H1 (cell line): ENCODE measurements at regions of chr1 and their contacts with region 1.

Region 1: DNA sequence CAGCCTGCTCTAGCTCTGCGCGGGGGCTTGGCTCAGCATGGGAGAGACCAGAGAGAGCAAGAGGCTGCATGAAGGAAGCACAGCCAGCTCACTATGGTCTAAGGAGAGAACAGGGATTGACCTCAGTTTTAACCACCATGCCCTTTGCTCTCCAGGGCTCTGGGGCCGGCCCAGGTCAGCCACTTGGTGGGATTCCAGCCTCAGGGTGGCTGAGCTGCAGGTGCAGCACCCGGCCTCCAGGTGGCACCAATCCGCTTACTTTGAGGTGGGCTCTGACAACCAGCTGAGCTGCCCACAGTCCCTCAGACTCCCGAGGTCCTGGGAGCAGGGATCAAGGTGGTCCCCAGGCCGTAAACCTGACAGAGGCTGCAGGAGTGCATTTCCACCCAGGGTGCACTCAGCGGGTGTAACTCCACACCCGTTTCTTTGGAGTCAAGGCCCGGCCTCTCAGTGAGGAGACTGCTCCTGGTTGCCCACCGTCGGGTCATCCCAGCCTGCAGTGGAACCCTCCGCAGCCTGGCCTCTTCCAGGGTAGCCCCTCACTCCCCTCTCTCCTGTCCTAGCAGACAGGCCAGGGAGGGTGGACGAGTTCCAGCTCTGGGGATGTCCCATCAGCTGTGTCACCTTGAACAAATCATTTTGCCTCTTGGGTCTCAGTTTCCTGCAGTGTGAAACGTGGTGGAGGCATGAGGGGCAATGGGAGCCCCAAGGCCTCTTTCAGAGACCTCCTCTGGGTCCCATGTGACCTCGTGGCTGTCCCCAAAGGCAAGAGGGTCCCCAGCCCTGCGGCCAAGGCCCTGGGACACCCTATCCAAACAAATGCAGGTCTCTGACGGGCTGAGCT is 607 bp upstream of the LGR6 start:
- DNase-seq: peak in 1 of 2 experiments; percentile 92
- H3K4me3 ChIP-seq: peak overlapping the region in 3 of 4 experiments; percentile 34 to 65 (median 40); a peak in 5 of 8 replicates
- H3K27ac ChIP-seq: no peak overlapping the region
- H3K4me1 ChIP-seq: peaks cover 0 to 9% (median 2%) of the 10 kb centered on the region in 4 experiments; a peak in 5 of 7 replicates
- H3K27me3 ChIP-seq: peaks cover 16 to 31% (median 22%) of the 10 kb centered on the region in 4 experiments
- CTCF ChIP-seq: peak; percentile 93 to 97 (median 96)
- EP300 ChIP-seq: no peak
- POLR2A ChIP-seq: no peak
- RAD21 ChIP-seq: peak; percentile 81 to 86

Region 2: DNA sequence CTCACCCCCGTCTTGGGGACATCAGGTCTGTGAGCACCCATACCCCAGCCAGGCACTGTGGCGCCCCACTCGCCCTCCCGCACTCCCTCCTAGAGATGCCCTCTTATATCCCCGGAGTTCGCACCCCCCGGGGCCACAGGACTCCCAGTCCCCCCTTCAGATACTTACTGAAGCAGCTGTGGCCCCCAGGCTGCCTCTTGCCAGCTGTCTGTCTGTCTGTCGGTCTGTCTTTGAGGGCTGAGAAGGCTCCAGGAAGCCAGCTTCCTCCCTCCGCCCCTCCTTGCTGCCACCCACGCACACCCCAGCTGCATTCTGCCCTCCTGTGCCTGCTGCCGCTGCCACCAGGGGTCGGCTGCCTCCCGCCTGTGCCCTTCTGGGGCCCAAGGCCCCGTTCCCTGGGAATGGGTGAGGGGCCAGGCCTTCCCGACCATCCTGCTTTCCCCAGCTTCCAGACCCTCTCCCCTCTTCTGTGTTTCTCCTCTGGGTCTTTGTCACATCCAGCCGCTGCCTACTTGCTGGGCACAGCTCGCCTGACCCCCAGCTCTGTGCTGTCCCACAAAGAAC is 32.5 kb before region 1 on chr1 and contains the start of gene PTPN7:
- CTCF ChIA-PET with region 1: interaction called, 22 read pairs
- POLR2A ChIA-PET with region 1: no interaction called
- DNase-seq: no peak
- H3K4me3 ChIP-seq: no peak within 1 kb of the TSS
- H3K27ac ChIP-seq: no peak within 1 kb of the TSS
- H3K4me1 ChIP-seq: peaks cover 2 to 29% (median 11%) of the 10 kb centered on the region in 4 experiments
- H3K27me3 ChIP-seq: no peaks in the 10 kb centered on the region
- CTCF ChIP-seq: peak; percentile 13 to 27 (median 15); a peak in 2 of 4 replicates
- EP300 ChIP-seq: no peak
- POLR2A ChIP-seq: no peak
- RAD21 ChIP-seq: no peak
- total RNA-seq, gene PTPN7: not detected in 2 replicates

Region 3: DNA sequence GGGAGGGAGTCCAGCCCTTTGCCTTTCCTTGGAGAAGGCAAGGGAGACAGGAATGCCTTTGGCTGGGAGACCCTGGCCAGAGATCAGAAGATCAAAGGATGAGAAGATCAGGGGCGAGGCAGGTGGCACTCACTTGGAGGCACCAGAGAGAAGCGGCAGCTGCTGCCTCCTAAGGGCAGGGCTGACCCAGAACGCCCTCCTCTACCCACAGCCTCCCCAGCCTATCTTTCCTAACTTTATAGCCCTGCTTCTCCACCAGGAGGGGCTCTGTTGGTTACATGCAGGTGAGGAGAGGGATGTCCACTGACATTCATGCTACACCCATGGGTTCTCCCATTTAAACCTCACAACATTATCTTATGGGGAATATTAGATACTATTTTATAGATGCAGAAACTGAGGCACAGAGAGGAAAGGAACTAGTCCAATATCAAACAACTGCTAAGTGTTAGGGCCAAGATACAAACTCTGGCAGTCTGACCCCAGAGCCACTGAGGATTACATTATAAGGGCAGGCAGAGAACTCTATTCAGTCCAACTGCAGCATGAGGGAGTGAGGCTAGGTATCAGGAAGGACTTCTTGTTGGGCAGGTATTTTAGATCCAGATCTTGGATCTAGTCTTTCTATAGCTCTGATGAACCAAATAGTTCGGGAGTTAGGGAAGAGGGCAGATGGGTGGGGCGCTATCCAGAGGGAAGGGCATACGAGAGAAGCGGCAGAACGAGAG is 20.5 kb after region 1 on chr1:
- CTCF ChIA-PET with region 1: interaction called, 48 read pairs
- POLR2A ChIA-PET with region 1: interaction called, 3 read pairs
- DNase-seq: peak in 1 of 2 experiments; percentile 60
- H3K4me3 ChIP-seq: peak overlapping the region; percentile 60 to 74 (median 62)
- H3K27ac ChIP-seq: no peak overlapping the region
- H3K4me1 ChIP-seq: peaks cover 0 to 3% (median 1%) of the 10 kb centered on the region in 4 experiments; a peak in 5 of 7 replicates
- H3K27me3 ChIP-seq: peaks cover 2 to 10% (median 8%) of the 10 kb centered on the region in 4 experiments; a peak in 6 of 7 replicates
- CTCF ChIP-seq: peak; percentile 72 to 97 (median 88)
- EP300 ChIP-seq: no peak
- POLR2A ChIP-seq: no peak
- RAD21 ChIP-seq: peak; percentile 52 to 69

Region 4: GRCh38 chr1:202274611-202275010 is 81.6 kb after region 1 on chr1:
- CTCF ChIA-PET with region 1: interaction called, 14 read pairs
- POLR2A ChIA-PET with region 1: no interaction called
- DNase-seq: no peak
- H3K4me3 ChIP-seq: no peak overlapping the region
- H3K27ac ChIP-seq: no peak overlapping the region
- H3K4me1 ChIP-seq: no peaks in the 10 kb centered on the region
- H3K27me3 ChIP-seq: no peaks in the 10 kb centered on the region
- CTCF ChIP-seq: peak; percentile 66
- EP300 ChIP-seq: no peak
- POLR2A ChIP-seq: no peak
- RAD21 ChIP-seq: peak; percentile 56 to 73

Region 5: DNA sequence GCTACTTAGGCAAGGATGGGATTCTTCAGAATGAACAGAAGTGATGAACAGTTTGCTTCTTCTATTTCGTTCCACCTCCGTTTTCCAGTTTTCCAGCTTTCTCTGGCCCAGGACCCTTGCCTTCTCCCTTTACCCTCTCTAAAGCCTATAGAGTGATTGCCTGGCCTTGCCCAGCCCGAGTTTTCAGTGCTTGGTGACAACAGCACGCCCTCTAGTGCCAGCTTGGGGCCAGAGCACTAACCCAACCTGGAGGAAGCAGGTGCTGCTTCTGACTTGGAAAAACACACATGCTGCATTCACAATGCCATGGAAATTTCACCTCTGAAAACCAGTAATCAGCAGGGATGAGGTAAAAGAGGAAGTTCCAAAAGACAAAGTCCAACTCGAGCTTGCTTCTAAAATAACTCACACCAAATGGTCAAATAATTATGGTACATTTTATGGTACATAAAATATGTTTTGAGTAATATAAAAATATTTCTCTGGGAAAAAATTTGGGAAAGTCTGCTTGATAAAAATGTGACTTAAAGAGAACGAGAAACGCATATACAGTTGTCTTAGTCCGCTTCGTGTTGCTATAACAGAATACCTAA is 122.7 kb after region 1 on chr1:
- CTCF ChIA-PET with region 1: interaction called, 107 read pairs
- POLR2A ChIA-PET with region 1: no interaction called
- DNase-seq: peak; percentile 49 to 90
- H3K4me3 ChIP-seq: no peak overlapping the region
- H3K27ac ChIP-seq: no peak overlapping the region
- H3K4me1 ChIP-seq: peaks cover 0 to 6% (median 1%) of the 10 kb centered on the region in 4 experiments; a peak in 3 of 7 replicates
- H3K27me3 ChIP-seq: no peaks in the 10 kb centered on the region; a peak in 1 of 7 replicates
- CTCF ChIP-seq: peak; percentile 98
- EP300 ChIP-seq: no peak
- POLR2A ChIP-seq: no peak
- RAD21 ChIP-seq: peak; percentile 97 to 98